Posterior vena cava (tissue), 2 donors: ENCODE measurements at regions of chr4 and their contacts with region 1.

Region 1: DNA sequence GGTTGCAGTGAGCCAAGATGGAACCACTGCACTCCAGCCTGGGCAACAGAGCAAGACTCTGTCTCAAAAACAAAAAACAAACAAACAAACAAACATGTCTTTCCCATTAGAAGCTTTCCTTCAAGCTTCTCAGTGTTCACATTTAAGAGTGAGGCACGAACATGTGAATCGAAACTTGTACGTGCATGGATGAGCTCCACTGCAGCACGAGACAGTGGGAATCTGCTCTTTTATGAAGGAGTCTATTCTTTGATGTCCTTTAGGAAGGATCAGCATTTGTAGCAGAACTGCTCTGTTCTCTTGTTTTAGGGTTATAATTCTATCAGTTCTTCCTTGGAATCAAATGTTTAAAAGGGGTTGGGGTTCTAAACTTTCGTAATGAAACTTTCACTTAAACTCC is 23.4 kb upstream of the ZNF518B start:
- DNase-seq: no peak

Region 2: DNA sequence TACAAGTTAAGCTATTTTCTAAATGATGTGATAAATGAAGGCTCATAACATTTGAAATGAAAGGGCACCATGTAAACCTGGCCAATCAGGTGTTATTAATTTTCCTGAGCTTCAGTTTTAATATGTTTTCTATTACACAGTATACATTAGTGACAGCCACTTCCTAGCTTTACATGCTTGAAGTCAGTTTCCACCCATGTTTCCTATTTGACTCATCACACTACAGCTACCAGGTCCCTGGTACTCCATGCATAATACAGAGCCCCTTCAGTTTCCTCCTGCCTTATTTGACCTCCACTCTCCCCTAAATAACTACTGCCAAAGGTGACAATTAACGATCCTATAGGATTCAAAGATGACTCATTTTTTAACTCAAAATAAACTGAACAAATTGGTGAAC is 41.7 kb before region 1 on chr4:
- intact Hi-C with region 1: no loop called
- DNase-seq: no peak

Region 3: GRCh38 chr4:10530137-10530786 is 49.6 kb after region 1 on chr4:
- intact Hi-C with region 1: no loop called
- DNase-seq: no peak

Region 4: DNA sequence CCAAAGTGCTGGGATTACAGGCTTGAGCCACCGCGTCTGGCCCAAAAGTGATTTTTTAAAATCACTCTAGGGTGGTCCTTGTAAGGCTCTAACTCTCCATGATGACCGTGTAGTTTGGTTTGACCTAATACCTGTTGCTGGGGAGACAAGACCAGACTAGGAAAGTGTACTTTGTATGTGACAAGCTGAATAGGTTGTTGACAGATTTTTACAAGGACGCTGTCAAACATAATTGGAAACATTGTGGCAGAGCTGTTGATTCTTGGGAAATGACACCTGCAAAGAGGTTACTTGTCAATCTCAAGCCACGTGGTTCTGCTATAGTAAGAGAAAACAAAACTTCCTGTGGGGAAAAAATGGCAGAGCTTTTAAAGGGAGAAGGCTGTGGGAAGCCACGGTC is 1750.5 kb after region 1 on chr4:
- intact Hi-C with region 1: loop called in 1 of 2 experiments (anchors 10 kb)
- DNase-seq: no peak